Right ventricle myocardium inferior (tissue), 1 donor: ENCODE measurements at regions of chr11 and their contacts with region 1.

Region 1: GRCh38 chr11:8807544-8808225 is 103.3 kb upstream of the AKIP1 start:
- DNase-seq: peak; percentile 76
- ATAC-seq: peak; percentile 69

Region 2: DNA sequence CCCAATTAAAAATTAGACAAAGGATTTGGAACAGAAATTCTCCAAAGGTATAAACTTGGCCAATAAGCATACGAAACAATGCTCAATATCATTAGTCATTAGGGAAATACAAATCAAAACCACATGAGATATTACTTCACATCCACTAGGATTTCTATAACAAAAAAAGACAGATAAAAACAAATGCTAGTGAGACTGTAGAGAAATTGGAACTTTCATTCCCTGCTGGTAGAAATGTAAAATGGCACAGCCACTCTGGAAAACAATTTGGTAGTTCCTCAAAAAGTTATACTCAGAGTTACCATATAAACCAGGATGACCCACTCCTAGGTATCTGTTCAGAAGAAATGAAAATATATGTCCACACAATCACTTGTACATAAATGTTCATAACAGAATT is 53.4 kb before region 1 on chr11:
- intact Hi-C with region 1: loop called (anchors 10 kb)
- DNase-seq: no peak
- ATAC-seq: no peak

Region 3: GRCh38 chr11:8773916-8774539 is 33.7 kb before region 1 on chr11:
- intact Hi-C with region 1: loop called (anchors 5 kb)
- DNase-seq: no peak
- ATAC-seq: no peak